ENCODE measurements at regions of chr12 and their contacts with region 1.

Region 1: GRCh38 chr12:90253674-90254181 is 545.1 kb upstream of the ATP2B1 start:
- DNase-seq: peak; percentile 88
- ATAC-seq: peak; percentile 92
- H3K4me3 ChIP-seq: peak overlapping the region in 1 of 5 experiments; percentile 3
- H3K4me3 Mint-ChIP-seq: peak overlapping the region; percentile 86
- H3K27ac ChIP-seq: peak overlapping the region; percentile 60 to 64
- H3K27ac Mint-ChIP-seq: peak overlapping the region; percentile 97
- H3K4me1 ChIP-seq: peaks cover 22 to 27% of the 10 kb centered on the region in 2 donors
- H3K4me1 Mint-ChIP-seq: peaks cover 24% of the 10 kb centered on the region
- H3K27me3 ChIP-seq: no peaks in the 10 kb centered on the region
- H3K27me3 Mint-ChIP-seq: no peaks in the 10 kb centered on the region
- CTCF ChIP-seq: peak; percentile 66

Region 2: GRCh38 chr12:89856431-89856830 is 397.3 kb before region 1 on chr12:
- CTCF ChIA-PET with region 1: no interaction called
- POLR2A ChIA-PET with region 1: no interaction called
- intact Hi-C with region 1: loop called (anchors 5 kb)
- DNase-seq: peak; percentile 71
- ATAC-seq: peak; percentile 88
- H3K4me3 ChIP-seq: peak overlapping the region in 1 of 5 experiments; percentile 21
- H3K4me3 Mint-ChIP-seq: peak overlapping the region; percentile 64
- H3K27ac ChIP-seq: no peak overlapping the region
- H3K27ac Mint-ChIP-seq: peak overlapping the region; percentile 76
- H3K4me1 ChIP-seq: peaks cover 45 to 46% of the 10 kb centered on the region in 2 donors
- H3K4me1 Mint-ChIP-seq: peaks cover 50% of the 10 kb centered on the region
- H3K27me3 ChIP-seq: no peaks in the 10 kb centered on the region
- H3K27me3 Mint-ChIP-seq: no peaks in the 10 kb centered on the region
- CTCF ChIP-seq: no peak

Region 3: GRCh38 chr12:90102957-90103652 is 150.6 kb before region 1 on chr12:
- CTCF ChIA-PET with region 1: interaction called, 3 read pairs
- POLR2A ChIA-PET with region 1: no interaction called
- intact Hi-C with region 1: loop called (anchors 5 kb)
- DNase-seq: peak; percentile 66
- ATAC-seq: peak; percentile 70
- H3K4me3 ChIP-seq: peak overlapping the region in 1 of 5 experiments; percentile 46
- H3K4me3 Mint-ChIP-seq: peak overlapping the region; percentile 77
- H3K27ac ChIP-seq: no peak overlapping the region
- H3K27ac Mint-ChIP-seq: no peak overlapping the region
- H3K4me1 ChIP-seq: peaks cover 4 to 5% of the 10 kb centered on the region in 2 donors
- H3K4me1 Mint-ChIP-seq: peaks cover 29% of the 10 kb centered on the region
- H3K27me3 ChIP-seq: no peaks in the 10 kb centered on the region
- H3K27me3 Mint-ChIP-seq: no peaks in the 10 kb centered on the region
- CTCF ChIP-seq: peak; percentile 75

Region 4: GRCh38 chr12:90193500-90193899 is 60.2 kb before region 1 on chr12:
- CTCF ChIA-PET with region 1: no interaction called
- POLR2A ChIA-PET with region 1: no interaction called
- intact Hi-C with region 1: loop called (anchors 5 kb)
- DNase-seq: no peak
- ATAC-seq: no peak
- H3K4me3 ChIP-seq: no peak overlapping the region
- H3K4me3 Mint-ChIP-seq: no peak overlapping the region
- H3K27ac ChIP-seq: no peak overlapping the region
- H3K27ac Mint-ChIP-seq: no peak overlapping the region
- H3K4me1 ChIP-seq: no peaks in the 10 kb centered on the region
- H3K4me1 Mint-ChIP-seq: no peaks in the 10 kb centered on the region
- H3K27me3 ChIP-seq: no peaks in the 10 kb centered on the region
- H3K27me3 Mint-ChIP-seq: peaks cover 7% of the 10 kb centered on the region
- CTCF ChIP-seq: no peak

Region 5: DNA sequence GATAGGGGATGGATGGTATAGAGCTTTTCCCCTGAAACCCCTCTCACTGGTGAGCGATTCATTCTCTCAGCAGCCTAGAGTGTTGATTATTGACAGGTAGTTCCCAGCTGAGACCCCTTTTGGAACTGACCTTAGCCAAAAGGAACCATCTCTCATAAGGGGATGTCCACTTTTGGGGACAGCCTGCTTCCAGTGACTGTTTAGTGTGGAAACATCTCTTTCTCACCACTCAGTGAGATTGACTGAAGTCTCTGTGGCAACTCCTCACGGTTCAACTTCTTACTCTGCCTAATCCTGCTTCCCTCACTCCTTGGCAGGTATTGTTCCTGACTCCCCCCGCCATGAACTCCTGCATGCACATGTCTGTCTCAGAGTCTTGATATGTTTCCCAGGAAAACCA is 15.9 kb before region 1 on chr12:
- CTCF ChIA-PET with region 1: no interaction called
- POLR2A ChIA-PET with region 1: no interaction called
- intact Hi-C with region 1: no loop called
- DNase-seq: no peak
- ATAC-seq: no peak
- H3K4me3 ChIP-seq: no peak overlapping the region
- H3K4me3 Mint-ChIP-seq: no peak overlapping the region
- H3K27ac ChIP-seq: no peak overlapping the region
- H3K27ac Mint-ChIP-seq: no peak overlapping the region
- H3K4me1 ChIP-seq: no peaks in the 10 kb centered on the region
- H3K4me1 Mint-ChIP-seq: peaks cover 2% of the 10 kb centered on the region
- H3K27me3 ChIP-seq: no peaks in the 10 kb centered on the region
- H3K27me3 Mint-ChIP-seq: peaks cover 20% of the 10 kb centered on the region
- CTCF ChIP-seq: no peak

Region 6: DNA sequence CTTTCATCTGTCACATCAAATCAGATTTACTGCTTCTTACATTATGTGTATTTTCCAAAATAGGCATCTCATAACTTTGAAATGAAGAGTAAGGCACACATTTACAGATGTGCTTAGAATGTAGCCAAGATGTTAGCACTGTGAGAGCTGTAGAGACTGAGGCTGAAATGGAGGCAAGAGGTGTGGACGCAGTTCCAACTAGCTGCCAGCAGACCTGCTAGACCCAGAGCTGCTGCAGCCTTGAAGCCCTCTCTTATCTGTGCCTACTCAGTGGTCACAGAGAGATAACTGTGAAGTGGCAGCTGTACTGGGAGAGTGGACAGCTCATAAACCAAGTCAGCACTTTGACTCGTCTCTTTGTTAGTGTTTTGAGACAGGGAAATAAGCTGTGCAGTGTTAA is 230.4 kb after region 1 on chr12:
- CTCF ChIA-PET with region 1: no interaction called
- POLR2A ChIA-PET with region 1: no interaction called
- intact Hi-C with region 1: no loop called
- DNase-seq: no peak
- ATAC-seq: no peak
- H3K4me3 ChIP-seq: no peak overlapping the region
- H3K4me3 Mint-ChIP-seq: no peak overlapping the region
- H3K27ac ChIP-seq: no peak overlapping the region
- H3K27ac Mint-ChIP-seq: no peak overlapping the region
- H3K4me1 ChIP-seq: no peaks in the 10 kb centered on the region
- H3K4me1 Mint-ChIP-seq: no peaks in the 10 kb centered on the region
- H3K27me3 ChIP-seq: no peaks in the 10 kb centered on the region
- H3K27me3 Mint-ChIP-seq: no peaks in the 10 kb centered on the region
- CTCF ChIP-seq: no peak

Measured in B cell (primary cell).